Astrocyte of the cerebellum (primary cell): ENCODE measurements at regions of chr2 and their contacts with region 1.

Region 1: DNA sequence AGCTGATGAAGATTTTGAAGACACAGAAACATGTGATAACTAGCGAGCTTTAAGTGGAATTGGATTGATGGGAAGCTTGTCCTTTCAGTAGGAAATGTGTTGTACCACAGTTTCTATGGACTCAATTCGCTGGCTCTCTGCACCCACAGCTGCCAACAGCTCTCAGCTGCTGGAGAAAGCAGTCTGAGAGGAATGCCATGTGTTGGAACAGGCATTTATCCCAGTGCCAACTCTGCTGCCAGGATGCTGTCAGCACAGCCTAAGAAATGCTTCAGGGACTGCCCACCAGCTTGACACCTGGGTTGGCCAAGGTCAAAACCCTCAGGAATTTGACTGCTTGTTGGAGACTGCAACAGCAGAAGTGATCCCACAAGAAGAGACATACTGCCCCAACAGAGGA is 193.0 kb upstream of the THSD7B start:
- DNase-seq: no peak
- H3K4me3 ChIP-seq: no peak overlapping the region
- CTCF ChIP-seq: no peak

Region 2: DNA sequence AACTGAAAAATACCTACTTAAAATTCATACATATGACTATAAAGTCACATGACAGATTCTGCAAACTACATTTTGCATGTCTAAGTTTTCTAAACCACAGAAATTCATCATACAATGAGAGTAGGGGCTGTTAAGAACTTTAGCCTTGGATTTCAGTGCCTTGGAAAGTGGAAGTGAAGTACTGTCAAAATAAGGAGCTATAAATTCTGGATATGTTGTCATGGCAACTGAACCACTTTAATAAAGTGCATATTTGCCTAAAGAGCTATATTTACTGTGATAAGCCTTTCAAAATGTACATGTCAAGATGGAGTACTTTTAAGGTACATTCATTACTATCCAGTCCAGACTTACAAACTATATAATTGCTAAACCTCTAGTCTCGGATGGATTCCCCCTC is 1293.1 kb before region 1 on chr2:
- in situ Hi-C with region 1: no loop called
- DNase-seq: no peak
- H3K4me3 ChIP-seq: no peak overlapping the region
- CTCF ChIP-seq: no peak

Region 3: GRCh38 chr2:136117909-136118818 is 454.2 kb before region 1 on chr2 and contains the start of gene CXCR4:
- in situ Hi-C with region 1: no loop called
- DNase-seq: no peak
- H3K4me3 ChIP-seq: peak within 1 kb of the TSS; percentile 39
- CTCF ChIP-seq: peak; percentile 28

Region 4: GRCh38 chr2:136468799-136469369 is 103.5 kb before region 1 on chr2:
- in situ Hi-C with region 1: no loop called
- DNase-seq: no peak
- H3K4me3 ChIP-seq: no peak overlapping the region
- CTCF ChIP-seq: no peak

Region 5: GRCh38 chr2:136527560-136527959 is 44.8 kb before region 1 on chr2:
- in situ Hi-C with region 1: loop called (anchors 5 kb)
- DNase-seq: peak; percentile 8
- H3K4me3 ChIP-seq: no peak overlapping the region
- CTCF ChIP-seq: no peak